Activated B cell treated with CpG ODN at 0.5 μM for 24 hours (primary cell): ENCODE measurements at regions of chr3 and their contacts with region 1.

Region 1: DNA sequence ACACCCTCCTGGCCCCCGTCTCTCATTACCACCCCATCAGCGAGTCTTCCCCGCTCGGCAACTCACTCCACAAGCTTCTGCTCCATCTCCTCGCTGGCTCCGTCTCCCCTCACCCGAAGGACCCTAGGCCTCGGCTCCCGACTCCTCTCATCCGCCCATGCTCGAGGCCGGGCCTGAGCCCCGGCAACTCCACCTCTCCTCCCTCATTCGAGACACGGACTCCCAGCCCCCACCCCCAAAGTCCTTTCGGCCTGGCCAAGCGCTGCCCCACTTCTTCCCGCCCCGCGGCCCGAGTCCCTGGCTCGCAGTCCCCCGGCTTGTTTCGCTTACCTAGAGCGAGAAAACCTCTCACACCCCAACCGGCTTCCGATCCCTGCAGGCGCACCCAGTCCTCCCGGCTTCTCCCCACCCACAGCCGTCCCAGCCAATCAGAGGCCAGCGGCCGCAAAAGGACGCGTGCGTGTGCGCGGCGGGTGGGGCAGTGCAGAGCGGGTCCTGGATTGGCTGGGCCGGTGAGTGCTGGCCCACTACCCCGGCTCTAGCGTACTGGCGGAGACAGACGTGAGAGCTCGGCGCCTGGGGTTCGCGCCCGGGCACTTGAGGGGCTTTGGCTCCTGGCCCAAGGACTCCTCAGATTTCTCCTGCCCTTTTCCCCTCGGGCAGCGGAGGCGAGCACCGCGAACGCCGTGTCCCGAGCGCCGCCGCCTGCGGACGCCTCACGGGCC is at the start of gene HIGD1A:
- DNase-seq: peak; percentile 83
- ATAC-seq: peak; percentile 99
- H3K4me3 Mint-ChIP-seq: peak within 1 kb of the TSS; percentile 97
- H3K27ac Mint-ChIP-seq: peak within 1 kb of the TSS; percentile 87
- H3K4me1 Mint-ChIP-seq: peaks cover 41% of the 10 kb centered on the region
- H3K27me3 Mint-ChIP-seq: peaks cover 6% of the 10 kb centered on the region
- CTCF ChIP-seq: no peak
- total RNA-seq, gene HIGD1A: 35.9 and 38.2 TPM in 2 replicates

Region 2: DNA sequence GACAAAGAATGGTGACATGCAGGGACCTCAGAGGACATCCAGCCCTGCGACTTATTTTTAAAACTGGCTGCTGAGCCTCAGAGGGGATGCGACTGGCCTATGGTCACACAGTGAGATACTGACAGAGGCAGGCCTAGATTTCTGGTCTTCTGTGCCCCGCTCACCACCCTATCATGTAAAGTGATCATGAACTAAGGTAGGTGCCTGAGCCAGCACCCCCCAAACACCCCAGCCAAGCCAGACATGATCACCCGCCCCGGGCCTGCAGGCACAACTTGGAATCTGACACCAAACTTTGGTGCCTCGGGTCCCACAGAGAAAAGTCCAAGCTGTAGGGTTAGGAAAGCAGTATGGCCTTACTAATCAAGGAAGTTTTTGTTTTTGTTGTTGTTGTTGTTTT is 67.7 kb before region 1 on chr3:
- CTCF ChIA-PET with region 1: no interaction called
- POLR2A ChIA-PET with region 1: no interaction called
- intact Hi-C with region 1: no loop called
- DNase-seq: no peak
- ATAC-seq: no peak
- H3K4me3 Mint-ChIP-seq: no peak overlapping the region
- H3K27ac Mint-ChIP-seq: no peak overlapping the region
- H3K4me1 Mint-ChIP-seq: peaks cover 17% of the 10 kb centered on the region
- H3K27me3 Mint-ChIP-seq: no peaks in the 10 kb centered on the region
- CTCF ChIP-seq: no peak

Region 3: DNA sequence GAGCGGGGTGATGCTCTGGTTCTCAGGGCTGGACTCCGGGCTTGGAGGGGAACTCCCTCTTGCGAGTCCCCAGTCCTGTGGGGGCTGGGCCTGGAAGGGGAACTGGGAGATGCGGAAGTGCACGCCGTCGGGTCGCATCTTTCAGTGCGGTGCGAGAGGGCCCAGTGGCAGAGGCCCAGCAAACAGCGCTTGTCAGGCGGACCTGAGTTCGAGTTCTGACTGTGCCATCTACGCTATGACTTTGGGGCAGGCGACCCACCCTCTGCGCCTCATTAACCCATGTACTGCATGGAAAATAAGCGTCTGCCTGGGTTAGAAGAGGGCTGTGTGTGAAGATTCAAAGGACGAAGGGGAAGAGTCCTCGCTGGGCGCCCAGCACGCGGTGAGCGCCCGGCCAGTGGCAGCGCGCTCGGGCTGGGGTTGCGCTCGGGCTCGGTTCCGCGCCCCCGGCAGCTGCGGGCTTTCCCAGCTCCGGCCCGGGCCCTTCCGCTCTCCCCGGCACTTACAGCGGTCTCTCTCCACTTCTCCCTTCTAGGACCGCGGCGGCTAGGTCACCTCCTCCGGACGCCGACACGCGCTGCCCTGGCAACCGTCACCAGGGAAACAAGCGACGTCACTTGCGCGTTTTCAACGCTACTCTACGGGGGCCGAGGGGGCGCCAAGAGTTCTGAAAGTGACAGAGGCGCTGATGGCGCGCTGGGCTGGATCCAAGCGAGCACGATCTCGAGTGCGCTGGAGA is 31.4 kb before region 1 on chr3 and contains the start of gene CCDC13:
- CTCF ChIA-PET with region 1: no interaction called
- POLR2A ChIA-PET with region 1: interaction called, 6 read pairs
- intact Hi-C with region 1: loop called (anchors 1 kb)
- DNase-seq: peak; percentile 97
- ATAC-seq: peak; percentile 90
- H3K4me3 Mint-ChIP-seq: peak within 1 kb of the TSS; percentile 90
- H3K27ac Mint-ChIP-seq: peak within 1 kb of the TSS; percentile 89
- H3K4me1 Mint-ChIP-seq: peaks cover 13% of the 10 kb centered on the region
- H3K27me3 Mint-ChIP-seq: no peaks in the 10 kb centered on the region
- CTCF ChIP-seq: no peak
- total RNA-seq, gene CCDC13: 1.7 and 1.9 TPM in 2 replicates

Region 4: GRCh38 chr3:42780892-42781700 is 23.2 kb before region 1 on chr3:
- CTCF ChIA-PET with region 1: interaction called, 4 read pairs
- POLR2A ChIA-PET with region 1: no interaction called
- intact Hi-C with region 1: loop called (anchors 2 kb)
- DNase-seq: no peak
- ATAC-seq: peak; percentile 79
- H3K4me3 Mint-ChIP-seq: no peak overlapping the region
- H3K27ac Mint-ChIP-seq: no peak overlapping the region
- H3K4me1 Mint-ChIP-seq: peaks cover 2% of the 10 kb centered on the region
- H3K27me3 Mint-ChIP-seq: no peaks in the 10 kb centered on the region
- CTCF ChIP-seq: peak; percentile 63

Region 5: GRCh38 chr3:42846685-42847522 is 42.6 kb after region 1 on chr3:
- CTCF ChIA-PET with region 1: no interaction called
- POLR2A ChIA-PET with region 1: no interaction called
- intact Hi-C with region 1: loop called (anchors 5 kb)
- DNase-seq: no peak
- ATAC-seq: peak; percentile 90
- H3K4me3 Mint-ChIP-seq: peak overlapping the region; percentile 66
- H3K27ac Mint-ChIP-seq: peak overlapping the region; percentile 85
- H3K4me1 Mint-ChIP-seq: peaks cover 31% of the 10 kb centered on the region
- H3K27me3 Mint-ChIP-seq: no peaks in the 10 kb centered on the region
- CTCF ChIP-seq: no peak

Region 6: DNA sequence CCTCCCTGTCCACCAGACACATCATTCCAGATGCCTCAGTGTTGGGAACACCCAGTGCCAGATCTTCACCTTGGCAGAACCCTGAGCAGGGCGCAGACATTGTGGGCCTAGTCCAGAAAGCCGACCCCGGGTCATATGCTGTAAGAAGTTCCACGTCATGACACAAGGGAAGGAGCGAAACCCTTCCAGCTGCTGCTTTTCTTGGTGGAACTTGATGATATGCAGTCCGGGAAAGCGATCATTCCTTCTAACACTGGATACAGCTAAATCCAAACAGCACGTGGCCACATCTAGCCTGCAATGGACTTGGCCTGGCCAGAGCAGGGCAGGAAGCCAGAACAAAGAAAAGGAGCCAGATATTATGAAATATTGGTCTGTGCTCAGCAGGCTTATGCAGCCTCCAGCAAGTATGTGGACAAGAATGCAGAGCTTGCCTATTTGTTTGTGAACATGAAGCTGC is 196.9 kb after region 1 on chr3:
- CTCF ChIA-PET with region 1: no interaction called
- POLR2A ChIA-PET with region 1: no interaction called
- intact Hi-C with region 1: no loop called
- DNase-seq: no peak
- ATAC-seq: no peak
- H3K4me3 Mint-ChIP-seq: no peak overlapping the region
- H3K27ac Mint-ChIP-seq: no peak overlapping the region
- H3K4me1 Mint-ChIP-seq: no peaks in the 10 kb centered on the region
- H3K27me3 Mint-ChIP-seq: peaks cover 5% of the 10 kb centered on the region
- CTCF ChIP-seq: no peak

Region 7: GRCh38 chr3:43105596-43106292 is 301.5 kb after region 1 on chr3 and contains the start of gene POMGNT2:
- CTCF ChIA-PET with region 1: no interaction called
- POLR2A ChIA-PET with region 1: no interaction called
- intact Hi-C with region 1: loop called (anchors 10 kb)
- DNase-seq: peak; percentile 80
- ATAC-seq: peak; percentile 98
- H3K4me3 Mint-ChIP-seq: peak within 1 kb of the TSS; percentile 79
- H3K27ac Mint-ChIP-seq: no peak within 1 kb of the TSS
- H3K4me1 Mint-ChIP-seq: peaks cover 14% of the 10 kb centered on the region
- H3K27me3 Mint-ChIP-seq: no peaks in the 10 kb centered on the region
- CTCF ChIP-seq: no peak
- total RNA-seq, gene POMGNT2: 2.6 and 2.7 TPM in 2 replicates